ENCODE measurements at regions of chr5 and their contacts with region 1.

Region 1: DNA sequence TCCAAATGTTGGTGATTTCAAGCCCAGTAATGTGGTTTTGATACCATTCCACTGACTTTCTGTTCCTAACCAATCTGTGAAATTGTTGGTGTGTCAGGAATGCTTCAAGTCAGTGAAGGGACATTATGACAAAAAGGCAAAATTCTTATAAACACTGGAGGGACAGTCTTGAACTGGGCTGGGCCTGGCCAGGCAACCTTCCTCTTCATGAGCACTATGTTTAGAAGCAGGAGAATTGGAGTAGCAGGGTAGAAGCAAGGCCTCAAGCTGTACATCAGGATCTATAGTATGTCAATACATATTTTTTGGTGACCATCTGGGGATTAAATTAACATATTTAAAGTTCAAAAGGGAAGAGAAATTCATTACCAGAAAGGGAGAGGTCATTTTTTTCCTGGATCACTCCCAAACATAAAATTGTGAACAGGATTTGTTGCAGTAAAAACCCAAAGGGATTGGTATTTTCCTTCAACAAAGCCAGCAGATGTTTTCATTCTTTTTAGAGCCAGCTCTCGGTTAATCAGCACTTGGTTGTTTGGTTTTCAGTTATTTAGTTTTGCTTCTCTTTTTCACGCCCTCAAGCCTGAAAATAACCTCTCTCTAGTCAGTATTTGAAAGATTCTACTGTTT is 77.9 kb upstream of the PIK3R1 start:
- DNase-seq: peak; percentile 73
- H3K4me3 ChIP-seq: no peak overlapping the region
- H3K27me3 ChIP-seq: no peaks in the 10 kb centered on the region
- CTCF ChIP-seq: no peak

Region 2: GRCh38 chr5:68126886-68127285 is 10.7 kb before region 1 on chr5:
- CTCF ChIA-PET with region 1: interaction called, 14 read pairs
- POLR2A ChIA-PET with region 1: no interaction called
- DNase-seq: peak; percentile 8
- H3K4me3 ChIP-seq: no peak overlapping the region
- H3K27me3 ChIP-seq: no peaks in the 10 kb centered on the region
- CTCF ChIP-seq: no peak

Region 3: DNA sequence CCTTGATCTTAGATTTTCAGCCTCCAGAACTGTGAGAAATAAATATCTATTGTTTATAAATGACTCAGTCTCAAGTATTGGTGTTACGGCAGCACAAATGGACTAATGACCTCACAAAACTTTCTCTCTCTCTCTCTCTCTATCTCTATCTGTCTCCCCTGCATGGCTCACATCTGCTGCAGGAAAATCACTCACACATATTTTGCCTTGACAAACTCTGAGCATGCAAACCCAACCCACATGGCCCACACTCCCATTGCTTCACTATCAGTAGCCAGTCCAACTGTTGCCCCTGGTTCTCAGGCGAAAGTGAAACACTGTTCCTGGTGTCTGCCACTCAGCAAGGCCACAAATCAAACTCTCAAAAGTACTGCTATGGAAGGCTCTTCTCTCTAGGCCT is 11.6 kb after region 1 on chr5:
- CTCF ChIA-PET with region 1: no interaction called
- POLR2A ChIA-PET with region 1: no interaction called
- DNase-seq: no peak
- H3K4me3 ChIP-seq: no peak overlapping the region
- H3K27me3 ChIP-seq: no peaks in the 10 kb centered on the region
- CTCF ChIP-seq: no peak

Measured in BJ (cell line).